Breast epithelium (tissue), 4 donors: ENCODE measurements at regions of chr2 and their contacts with region 1.

Region 1: DNA sequence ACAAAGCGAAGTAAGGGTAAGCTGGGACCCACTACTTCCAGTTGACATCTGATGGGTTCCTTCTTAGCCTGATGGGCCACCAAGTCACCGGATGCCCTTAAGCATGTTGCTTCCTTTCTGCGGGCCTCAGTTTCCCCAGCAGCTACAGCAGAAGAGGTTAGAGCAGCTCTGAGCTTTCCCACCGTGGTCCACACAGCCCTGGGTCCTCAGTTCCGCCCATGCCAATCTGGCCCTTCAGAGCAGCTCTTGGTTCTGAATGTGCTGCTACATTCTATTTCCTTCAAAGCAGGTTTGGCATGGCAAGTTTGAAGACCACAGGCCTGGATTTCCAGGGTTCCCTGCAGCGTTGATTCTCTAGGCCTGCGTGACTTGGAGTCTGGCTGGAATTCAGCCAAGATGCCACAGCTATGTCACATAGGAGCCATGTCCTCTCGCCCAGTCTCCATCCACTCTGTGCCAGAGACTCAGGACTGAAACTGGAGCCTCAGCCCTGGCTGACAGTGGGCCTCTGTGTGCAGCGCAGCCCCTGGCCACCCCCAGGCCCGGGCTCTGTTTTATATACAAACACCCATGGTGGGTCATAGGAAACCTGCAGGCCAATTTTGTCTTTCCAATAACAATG is 79.6 kb downstream of the TFCP2L1 start:
- DNase-seq: peak; percentile 68 to 78
- H3K4me3 ChIP-seq: no peak overlapping the region
- H3K27ac ChIP-seq: peak overlapping the region; percentile 25 to 65
- H3K4me1 ChIP-seq: no peaks in the 10 kb centered on the region
- H3K27me3 ChIP-seq: no peaks in the 10 kb centered on the region
- CTCF ChIP-seq: no peak
- POLR2A ChIP-seq: no peak

Region 2: GRCh38 chr2:119435081-119435952 is 1770.1 kb before region 1 on chr2:
- intact Hi-C with region 1: loop called (anchors 5 kb)
- DNase-seq: no peak
- H3K4me3 ChIP-seq: no peak overlapping the region
- H3K27ac ChIP-seq: no peak overlapping the region
- H3K4me1 ChIP-seq: no peaks in the 10 kb centered on the region
- H3K27me3 ChIP-seq: no peaks in the 10 kb centered on the region
- CTCF ChIP-seq: no peak
- POLR2A ChIP-seq: no peak